CD8-positive, alpha-beta T cell (primary cell): ENCODE measurements at regions of chr11 and their contacts with region 1.

Region 1: GRCh38 chr11:98069861-98070260 is 950.9 kb upstream of the CNTN5 start:
- DNase-seq: no peak
- ATAC-seq: no peak
- H3K4me3 ChIP-seq: no peak overlapping the region
- H3K4me3 Mint-ChIP-seq: no peak overlapping the region
- H3K27ac ChIP-seq: no peak overlapping the region
- H3K27ac Mint-ChIP-seq: no peak overlapping the region
- H3K4me1 ChIP-seq: no peaks in the 10 kb centered on the region
- H3K4me1 Mint-ChIP-seq: no peaks in the 10 kb centered on the region
- H3K27me3 ChIP-seq: no peaks in the 10 kb centered on the region
- H3K27me3 Mint-ChIP-seq: no peaks in the 10 kb centered on the region
- CTCF ChIP-seq: no peak

Region 2: DNA sequence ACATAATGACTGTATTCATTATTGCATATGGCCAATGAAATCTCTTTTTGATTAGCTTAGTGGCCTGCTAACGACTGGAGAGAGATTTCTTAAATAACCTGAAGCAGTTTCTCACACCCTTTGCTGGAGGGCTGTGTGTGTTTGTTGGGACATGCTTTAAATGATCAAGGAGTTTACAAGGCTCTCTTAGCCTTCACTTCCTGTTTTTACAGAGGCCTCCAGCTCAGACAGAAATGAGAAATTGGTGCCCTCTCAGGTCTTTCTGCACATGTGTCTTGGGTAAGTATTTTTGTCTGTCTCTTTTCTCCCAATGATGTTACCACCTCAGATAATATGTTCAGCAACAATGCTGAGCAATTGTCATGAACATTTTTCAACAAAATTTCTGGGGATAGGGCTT is 66.5 kb after region 1 on chr11:
- CTCF ChIA-PET with region 1: no interaction called
- POLR2A ChIA-PET with region 1: no interaction called
- intact Hi-C with region 1: loop called in 1 of 2 experiments (anchors 10 kb)
- DNase-seq: no peak
- ATAC-seq: no peak
- H3K4me3 ChIP-seq: no peak overlapping the region
- H3K4me3 Mint-ChIP-seq: no peak overlapping the region
- H3K27ac ChIP-seq: no peak overlapping the region
- H3K27ac Mint-ChIP-seq: no peak overlapping the region
- H3K4me1 ChIP-seq: no peaks in the 10 kb centered on the region
- H3K4me1 Mint-ChIP-seq: no peaks in the 10 kb centered on the region
- H3K27me3 ChIP-seq: no peaks in the 10 kb centered on the region
- H3K27me3 Mint-ChIP-seq: no peaks in the 10 kb centered on the region
- CTCF ChIP-seq: no peak